Dorsolateral prefrontal cortex (tissue), 120 donors: ENCODE measurements at regions of chr13 and their contacts with region 1.

Region 1: GRCh38 chr13:27293873-27294515 is 23.4 kb downstream of the RASL11A start:
- DNase-seq: no peak
- H3K4me3 ChIP-seq: no peak overlapping the region
- H3K27ac ChIP-seq: peak overlapping the region in 2 of 59 donors; percentile 10 to 93
- H3K27me3 ChIP-seq: no peaks in the 10 kb centered on the region
- CTCF ChIP-seq: no peak

Region 2: DNA sequence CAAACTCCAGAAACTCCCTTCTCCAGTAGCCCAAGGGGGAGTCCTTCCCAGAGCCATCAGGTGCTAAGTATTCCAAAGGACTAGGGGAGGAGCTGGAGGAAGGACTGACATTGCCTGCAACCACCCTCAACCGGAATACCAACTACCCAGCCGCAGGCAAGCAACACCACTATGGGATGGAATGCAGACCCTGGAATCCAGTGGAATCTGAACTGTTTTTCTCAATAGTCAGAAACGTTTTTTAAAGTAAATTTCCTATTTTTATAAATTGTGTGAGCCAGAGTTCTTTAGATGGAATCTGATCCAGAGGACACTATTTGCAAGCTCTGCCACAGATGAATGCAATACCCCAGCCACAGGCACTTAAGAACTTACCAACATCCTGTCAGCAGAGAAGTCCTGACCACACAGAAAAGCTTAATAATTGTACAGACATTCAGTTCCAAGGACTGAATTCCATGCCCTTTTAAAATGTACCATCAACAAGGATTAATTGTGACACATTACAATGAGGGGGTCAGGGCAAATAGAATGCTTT is 214.5 kb before region 1 on chr13:
- intact Hi-C with region 1: no loop called
- DNase-seq: no peak
- H3K4me3 ChIP-seq: no peak overlapping the region
- H3K27ac ChIP-seq: no peak overlapping the region
- H3K27me3 ChIP-seq: no peaks in the 10 kb centered on the region
- CTCF ChIP-seq: no peak

Region 3: DNA sequence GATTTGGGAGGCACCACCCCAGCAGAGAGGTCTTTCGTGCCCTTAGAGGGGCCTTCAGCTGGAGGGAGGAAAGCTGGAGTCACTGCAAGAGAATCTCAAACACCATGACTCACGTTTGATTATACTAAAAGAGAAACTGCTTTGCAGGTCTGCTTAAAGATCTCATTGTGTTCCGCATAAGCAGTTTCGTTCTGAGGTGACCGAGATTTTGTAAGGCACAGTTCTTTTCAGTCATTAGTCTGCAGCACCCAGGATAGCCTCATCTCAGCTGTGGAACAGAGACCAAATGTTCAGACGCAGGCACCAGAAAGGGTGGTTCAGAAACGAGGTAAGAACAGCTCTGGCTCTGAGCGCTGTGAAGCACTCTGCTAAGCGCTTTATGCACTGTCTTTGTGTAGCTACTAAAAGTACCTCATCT is 59.2 kb after region 1 on chr13:
- intact Hi-C with region 1: loop called (anchors 5 kb)
- DNase-seq: no peak
- H3K4me3 ChIP-seq: peak overlapping the region in 7 of 59 donors; percentile 0 to 43 (median 6)
- H3K27ac ChIP-seq: peak overlapping the region in 48 of 59 donors; percentile 4 to 89 (median 72)
- H3K27me3 ChIP-seq: peaks cover 0 to 3% (median 0%) of the 10 kb centered on the region in 45 donors
- CTCF ChIP-seq: no peak